ENCODE measurements at regions of chr6 and their contacts with region 1.

Region 1: GRCh38 chr6:161370880-161371279 is 97.0 kb upstream of the AGPAT4 start:
- DNase-seq: no peak
- ATAC-seq: no peak

Region 2: DNA sequence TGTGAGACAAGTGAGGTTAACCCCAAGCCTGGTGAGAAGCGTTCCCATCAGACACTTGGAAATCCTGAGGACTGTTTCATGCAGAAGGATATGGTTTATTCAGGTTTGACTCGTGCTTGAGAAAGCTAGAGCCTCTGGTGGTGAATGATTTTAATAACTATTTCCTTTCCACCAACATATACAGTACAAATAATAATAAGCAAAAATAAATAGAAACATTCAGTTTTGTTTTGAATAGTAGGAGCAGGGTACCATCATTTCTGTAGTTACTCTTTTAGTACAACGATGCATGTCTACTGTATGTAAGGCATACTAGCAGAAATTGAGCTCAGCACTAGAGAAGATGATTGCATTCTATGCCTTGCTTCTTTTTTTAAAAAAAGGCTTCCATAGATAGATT is 635.4 kb before region 1 on chr6:
- intact Hi-C with region 1: loop called (anchors 2 kb)
- DNase-seq: no peak
- ATAC-seq: no peak

Region 3: GRCh38 chr6:161104966-161105365 is 265.9 kb before region 1 on chr6:
- intact Hi-C with region 1: loop called (anchors 5 kb)
- DNase-seq: no peak
- ATAC-seq: no peak

Region 4: DNA sequence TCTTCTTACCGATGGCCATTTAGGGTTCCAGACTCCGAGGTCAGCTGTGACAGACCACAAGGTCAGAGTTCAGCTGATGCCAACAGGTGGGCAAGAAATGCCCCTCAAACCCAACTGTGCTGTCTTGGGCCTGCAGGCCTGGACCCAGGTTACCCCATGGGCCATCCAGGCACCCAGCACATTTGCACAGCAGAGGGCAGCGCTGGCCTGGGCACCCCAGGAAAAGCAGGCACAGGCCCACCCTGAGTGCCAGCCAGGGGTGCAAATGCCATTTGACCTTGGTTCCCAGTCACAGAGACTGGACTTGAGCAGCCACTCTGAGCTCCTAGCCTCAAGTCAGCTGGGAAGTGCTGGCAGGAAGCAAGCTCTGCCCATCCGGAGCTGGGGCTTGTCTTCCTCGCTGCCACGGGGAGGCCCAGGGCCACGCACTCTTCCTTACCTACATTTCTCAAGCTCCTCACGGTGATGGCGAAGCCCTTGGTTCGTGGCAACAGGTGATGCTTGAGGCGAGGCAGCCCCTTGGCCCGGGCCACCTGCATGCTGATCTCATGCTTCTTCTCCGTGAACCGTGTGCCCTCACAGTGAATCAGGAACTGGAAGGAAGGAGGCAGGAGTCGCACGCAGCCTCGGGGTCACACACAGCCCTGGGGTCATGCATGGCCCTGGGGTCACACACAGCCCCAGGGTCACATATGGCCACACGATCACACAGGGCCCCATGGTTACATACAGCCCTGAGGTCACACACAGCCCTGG is 217.8 kb before region 1 on chr6:
- intact Hi-C with region 1: loop called (anchors 5 kb)
- DNase-seq: no peak
- ATAC-seq: peak; percentile 27